GM12878 (cell line): ENCODE measurements at regions of chr11 and their contacts with region 1.

Region 1: GRCh38 chr11:34174412-34175041 is 69.1 kb downstream of the NAT10 start:
- DNase-seq: no peak
- ATAC-seq: peak; percentile 98
- H3K4me3 ChIP-seq: no peak overlapping the region
- H3K27ac ChIP-seq: no peak overlapping the region
- H3K4me1 ChIP-seq: peaks cover 19% of the 10 kb centered on the region
- H3K27me3 ChIP-seq: no peaks in the 10 kb centered on the region
- CTCF ChIP-seq: peak; percentile 89 to 99 (median 95)
- EP300 ChIP-seq: no peak
- POLR2A ChIP-seq: no peak
- RAD21 ChIP-seq: peak; percentile 98

Region 2: GRCh38 chr11:33996498-33997454 is 177.8 kb before region 1 on chr11:
- CTCF ChIA-PET with region 1: interaction called, 23 read pairs
- POLR2A ChIA-PET with region 1: interaction called, 3 read pairs
- RAD21 ChIA-PET with region 1: interaction called, 5 read pairs
- SMC1A ChIA-PET with region 1: interaction called, 6 read pairs
- in situ Hi-C with region 1: no loop called
- intact Hi-C with region 1: loop called (anchors 5 kb)
- DNase-seq: peak; percentile 49
- ATAC-seq: peak; percentile 96
- H3K4me3 ChIP-seq: no peak overlapping the region; the same call in 1 of the 2 replicates
- H3K27ac ChIP-seq: no peak overlapping the region
- H3K4me1 ChIP-seq: peaks cover 25% of the 10 kb centered on the region
- H3K27me3 ChIP-seq: peaks cover 3 to 5% of the 10 kb centered on the region in 2 experiments; a peak in 3 of 4 replicates
- CTCF ChIP-seq: peak; percentile 82 to 89 (median 84); a peak in 5 of 6 replicates
- EP300 ChIP-seq: no peak
- POLR2A ChIP-seq: no peak
- RAD21 ChIP-seq: peak; percentile 87

Region 3: DNA sequence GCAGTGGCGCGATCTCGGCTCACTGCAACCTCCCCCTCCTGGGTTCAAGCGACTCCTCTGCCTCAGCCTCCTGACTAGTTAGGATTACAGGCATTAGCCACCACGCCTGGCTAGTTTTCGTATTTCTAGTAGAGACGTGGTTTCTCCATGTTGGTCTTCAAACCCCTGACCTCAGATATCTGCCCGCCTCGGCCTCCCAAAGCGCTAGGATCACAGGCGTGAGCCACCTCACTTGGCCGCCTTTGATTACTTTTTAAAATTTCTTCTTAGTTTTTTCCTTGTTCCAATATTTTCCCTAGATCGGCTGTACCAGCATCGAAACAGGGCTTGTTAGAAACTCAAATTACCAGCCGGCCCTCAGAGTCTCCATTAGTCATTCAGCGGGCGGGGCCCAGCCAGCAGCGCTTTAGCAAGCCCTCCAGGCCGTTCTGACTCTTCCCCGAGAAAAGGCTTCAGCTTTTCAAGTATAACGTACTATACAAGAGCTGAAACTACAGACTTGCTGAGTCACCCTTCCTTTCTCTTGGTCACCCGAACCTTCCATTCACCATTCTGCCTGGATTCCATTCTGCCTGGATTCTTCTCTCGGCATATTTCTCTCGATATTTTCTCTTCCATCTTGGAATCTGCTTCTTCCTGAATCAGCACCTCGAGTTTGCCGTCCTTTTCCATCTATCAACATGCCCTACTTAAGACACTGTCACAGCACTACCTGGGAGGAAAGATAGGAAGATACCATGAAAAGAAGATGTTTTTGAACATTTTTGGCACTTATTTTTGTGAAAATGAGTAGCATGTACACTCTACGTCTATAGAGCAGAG is 129.7 kb before region 1 on chr11:
- CTCF ChIA-PET with region 1: no interaction called
- POLR2A ChIA-PET with region 1: no interaction called
- RAD21 ChIA-PET with region 1: no interaction called
- SMC1A ChIA-PET with region 1: no interaction called
- in situ Hi-C with region 1: no loop called
- intact Hi-C with region 1: no loop called
- DNase-seq: no peak
- ATAC-seq: peak; percentile 57
- H3K4me3 ChIP-seq: no peak overlapping the region
- H3K27ac ChIP-seq: no peak overlapping the region
- H3K4me1 ChIP-seq: no peaks in the 10 kb centered on the region
- H3K27me3 ChIP-seq: no peaks in the 10 kb centered on the region
- CTCF ChIP-seq: no peak
- EP300 ChIP-seq: no peak
- POLR2A ChIP-seq: no peak
- RAD21 ChIP-seq: no peak

Region 4: GRCh38 chr11:34120651-34121050 is 53.9 kb before region 1 on chr11:
- CTCF ChIA-PET with region 1: no interaction called
- POLR2A ChIA-PET with region 1: no interaction called
- RAD21 ChIA-PET with region 1: no interaction called
- SMC1A ChIA-PET with region 1: no interaction called
- in situ Hi-C with region 1: no loop called
- intact Hi-C with region 1: no loop called
- DNase-seq: no peak
- ATAC-seq: no peak
- H3K4me3 ChIP-seq: no peak overlapping the region
- H3K27ac ChIP-seq: no peak overlapping the region
- H3K4me1 ChIP-seq: no peaks in the 10 kb centered on the region
- H3K27me3 ChIP-seq: no peaks in the 10 kb centered on the region
- CTCF ChIP-seq: no peak
- EP300 ChIP-seq: no peak
- POLR2A ChIP-seq: no peak
- RAD21 ChIP-seq: no peak

Region 5: DNA sequence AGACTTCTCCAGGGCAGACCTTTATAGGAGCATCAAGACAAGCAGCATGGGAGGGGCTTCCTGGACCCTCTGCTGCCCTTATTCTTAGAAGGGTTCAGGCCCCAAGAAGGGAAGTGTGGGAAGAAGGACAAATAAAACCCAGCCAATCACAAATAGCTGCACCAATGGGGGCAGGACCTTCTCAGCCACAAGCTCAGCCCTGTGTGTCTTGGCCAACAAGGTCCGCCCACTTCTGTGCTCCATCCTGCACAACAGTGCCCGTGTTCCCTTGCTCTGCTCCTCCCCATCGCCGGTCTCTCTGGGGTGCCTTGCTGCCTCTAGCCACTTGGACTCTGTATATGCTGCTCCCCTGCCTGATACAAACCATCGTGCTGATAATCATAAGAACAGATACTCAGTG is 17.1 kb after region 1 on chr11:
- CTCF ChIA-PET with region 1: interaction called, 15 read pairs
- POLR2A ChIA-PET with region 1: interaction called, 4 read pairs
- RAD21 ChIA-PET with region 1: interaction called, 7 read pairs
- SMC1A ChIA-PET with region 1: interaction called, 10 read pairs
- in situ Hi-C with region 1: no loop called
- intact Hi-C with region 1: no loop called
- DNase-seq: no peak
- ATAC-seq: peak; percentile 21; the same call in 1 of the 3 replicates
- H3K4me3 ChIP-seq: no peak overlapping the region
- H3K27ac ChIP-seq: no peak overlapping the region
- H3K4me1 ChIP-seq: no peaks in the 10 kb centered on the region
- H3K27me3 ChIP-seq: no peaks in the 10 kb centered on the region
- CTCF ChIP-seq: no peak
- EP300 ChIP-seq: no peak
- POLR2A ChIP-seq: no peak
- RAD21 ChIP-seq: no peak

Region 6: DNA sequence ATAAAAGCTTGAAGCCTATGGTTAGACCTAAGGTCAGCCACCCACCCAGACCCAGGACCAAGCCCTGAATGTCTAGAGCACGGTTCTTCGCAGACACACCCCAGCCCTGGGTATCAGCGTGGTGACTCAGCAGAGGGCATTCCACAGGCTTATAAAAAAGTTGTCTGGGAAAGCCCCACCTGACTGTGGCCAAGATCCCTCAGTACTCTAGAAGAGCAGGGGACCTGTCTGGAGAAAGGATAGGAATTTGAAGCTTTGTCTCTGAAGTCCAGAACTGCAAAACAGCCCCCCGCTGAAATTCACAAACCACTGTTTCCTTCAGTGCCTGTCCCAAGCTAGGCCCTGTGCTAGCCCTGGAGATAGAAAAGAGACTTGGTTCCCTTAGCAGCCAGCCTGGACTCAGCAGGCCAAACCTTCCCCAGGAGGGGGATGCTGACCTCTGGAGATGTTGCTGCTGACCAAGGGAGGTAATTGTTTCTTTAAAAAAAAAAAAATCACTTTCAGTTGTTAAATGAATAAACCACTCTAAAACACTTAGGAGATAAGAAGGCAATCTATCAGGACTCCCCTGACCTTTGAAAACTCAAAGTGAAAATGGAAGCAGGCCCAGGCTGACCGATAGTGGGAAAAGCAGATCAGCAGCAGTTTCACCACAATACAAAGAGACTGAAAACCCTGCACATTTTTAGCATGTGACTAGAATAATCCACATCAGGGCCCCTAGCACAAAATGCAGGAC is 69.4 kb after region 1 on chr11:
- CTCF ChIA-PET with region 1: interaction called, 30 read pairs
- POLR2A ChIA-PET with region 1: interaction called, 6 read pairs
- RAD21 ChIA-PET with region 1: interaction called, 17 read pairs
- SMC1A ChIA-PET with region 1: interaction called, 192 read pairs
- in situ Hi-C with region 1: no loop called
- intact Hi-C with region 1: loop called (anchors 2 kb)
- DNase-seq: peak; percentile 86
- ATAC-seq: peak; percentile 80
- H3K4me3 ChIP-seq: no peak overlapping the region
- H3K27ac ChIP-seq: peak overlapping the region; percentile 84
- H3K4me1 ChIP-seq: peaks cover 82% of the 10 kb centered on the region
- H3K27me3 ChIP-seq: no peaks in the 10 kb centered on the region
- CTCF ChIP-seq: no peak
- EP300 ChIP-seq: peak; percentile 74 to 87
- POLR2A ChIP-seq: no peak
- RAD21 ChIP-seq: peak; percentile 29; the same call in 1 of the 2 replicates

Region 7: GRCh38 chr11:34268906-34269430 is 94.4 kb after region 1 on chr11:
- CTCF ChIA-PET with region 1: no interaction called
- POLR2A ChIA-PET with region 1: no interaction called
- RAD21 ChIA-PET with region 1: no interaction called
- SMC1A ChIA-PET with region 1: no interaction called
- in situ Hi-C with region 1: no loop called
- intact Hi-C with region 1: no loop called
- DNase-seq: no peak
- ATAC-seq: no peak
- H3K4me3 ChIP-seq: no peak overlapping the region
- H3K27ac ChIP-seq: no peak overlapping the region
- H3K4me1 ChIP-seq: no peaks in the 10 kb centered on the region
- H3K27me3 ChIP-seq: no peaks in the 10 kb centered on the region
- CTCF ChIP-seq: no peak
- EP300 ChIP-seq: no peak
- POLR2A ChIP-seq: no peak
- RAD21 ChIP-seq: no peak

Region 8: GRCh38 chr11:34344768-34345539 is 170.4 kb after region 1 on chr11:
- CTCF ChIA-PET with region 1: interaction called, 167 read pairs
- POLR2A ChIA-PET with region 1: no interaction called
- RAD21 ChIA-PET with region 1: interaction called, 249 read pairs
- SMC1A ChIA-PET with region 1: interaction called, 171 read pairs
- in situ Hi-C with region 1: no loop called
- intact Hi-C with region 1: no loop called
- DNase-seq: no peak
- ATAC-seq: no peak
- H3K4me3 ChIP-seq: no peak overlapping the region
- H3K27ac ChIP-seq: no peak overlapping the region
- H3K4me1 ChIP-seq: no peaks in the 10 kb centered on the region
- H3K27me3 ChIP-seq: no peaks in the 10 kb centered on the region
- CTCF ChIP-seq: no peak
- EP300 ChIP-seq: no peak
- POLR2A ChIP-seq: no peak
- RAD21 ChIP-seq: no peak

Region 9: DNA sequence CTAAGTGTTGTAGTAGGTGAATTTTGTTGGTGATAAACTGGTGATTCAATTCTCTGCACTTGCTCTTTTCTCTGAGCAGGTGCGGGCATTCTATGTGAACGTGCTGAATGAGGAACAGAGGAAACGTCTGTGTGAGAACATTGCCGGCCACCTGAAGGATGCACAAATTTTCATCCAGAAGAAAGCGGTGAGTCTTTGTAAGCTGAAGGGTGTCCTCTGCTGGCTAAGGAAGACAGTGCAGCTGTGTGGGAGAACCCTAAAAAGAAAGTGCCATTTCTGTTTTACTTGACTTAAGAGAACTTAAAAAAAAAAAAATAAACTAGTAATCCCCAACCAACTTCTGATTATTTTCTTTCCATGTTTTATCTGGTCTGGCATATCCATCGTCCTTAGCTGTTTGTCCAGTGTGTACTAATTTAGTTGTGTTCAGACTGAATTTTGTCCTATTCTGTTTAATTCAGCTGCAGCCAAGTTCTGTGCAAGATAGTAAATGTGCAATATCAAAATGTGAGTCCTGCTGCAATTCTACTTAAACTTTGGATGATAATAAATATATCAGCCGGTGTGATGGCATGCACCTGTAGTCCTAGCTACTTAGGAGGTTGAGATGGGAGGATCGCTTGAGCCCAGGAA is 293.8 kb after region 1 on chr11:
- CTCF ChIA-PET with region 1: interaction called, 6 read pairs
- POLR2A ChIA-PET with region 1: no interaction called
- RAD21 ChIA-PET with region 1: interaction called, 4 read pairs
- SMC1A ChIA-PET with region 1: no interaction called
- in situ Hi-C with region 1: no loop called
- intact Hi-C with region 1: loop called (anchors 10 kb)
- DNase-seq: no peak
- ATAC-seq: peak; percentile 62
- H3K4me3 ChIP-seq: no peak overlapping the region
- H3K27ac ChIP-seq: no peak overlapping the region
- H3K4me1 ChIP-seq: no peaks in the 10 kb centered on the region
- H3K27me3 ChIP-seq: no peaks in the 10 kb centered on the region
- CTCF ChIP-seq: peak; percentile 55 to 73 (median 67)
- EP300 ChIP-seq: no peak
- POLR2A ChIP-seq: no peak
- RAD21 ChIP-seq: peak; percentile 67

Region 10: DNA sequence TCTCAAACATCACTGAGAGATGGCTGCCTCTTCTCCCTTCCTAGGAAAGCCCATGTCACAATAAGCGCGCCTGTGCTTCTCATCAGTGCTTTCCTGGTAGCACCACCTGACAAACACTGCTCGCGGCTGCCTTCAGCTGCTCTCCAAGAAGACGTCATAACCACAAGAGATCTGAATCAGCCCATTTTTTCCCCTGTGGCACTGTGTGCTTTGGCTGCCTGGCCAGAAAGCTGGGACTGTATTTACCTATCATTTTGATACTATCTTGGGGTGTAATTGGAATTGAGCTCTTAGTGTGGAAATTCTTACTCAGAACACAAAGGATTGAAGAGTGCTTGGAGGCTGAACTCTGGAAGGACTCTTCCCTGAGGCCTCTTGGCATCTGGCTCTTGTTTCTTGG is 396.1 kb after region 1 on chr11:
- CTCF ChIA-PET with region 1: no interaction called
- POLR2A ChIA-PET with region 1: no interaction called
- RAD21 ChIA-PET with region 1: no interaction called
- SMC1A ChIA-PET with region 1: no interaction called
- in situ Hi-C with region 1: no loop called
- intact Hi-C with region 1: no loop called
- DNase-seq: no peak
- ATAC-seq: no peak
- H3K4me3 ChIP-seq: no peak overlapping the region
- H3K27ac ChIP-seq: no peak overlapping the region
- H3K4me1 ChIP-seq: no peaks in the 10 kb centered on the region
- H3K27me3 ChIP-seq: no peaks in the 10 kb centered on the region; a peak in 4 of 4 replicates
- CTCF ChIP-seq: no peak
- EP300 ChIP-seq: no peak
- POLR2A ChIP-seq: no peak
- RAD21 ChIP-seq: no peak